MCF 10A (cell line): ENCODE measurements at regions of chr21 and their contacts with region 1.

Region 1: DNA sequence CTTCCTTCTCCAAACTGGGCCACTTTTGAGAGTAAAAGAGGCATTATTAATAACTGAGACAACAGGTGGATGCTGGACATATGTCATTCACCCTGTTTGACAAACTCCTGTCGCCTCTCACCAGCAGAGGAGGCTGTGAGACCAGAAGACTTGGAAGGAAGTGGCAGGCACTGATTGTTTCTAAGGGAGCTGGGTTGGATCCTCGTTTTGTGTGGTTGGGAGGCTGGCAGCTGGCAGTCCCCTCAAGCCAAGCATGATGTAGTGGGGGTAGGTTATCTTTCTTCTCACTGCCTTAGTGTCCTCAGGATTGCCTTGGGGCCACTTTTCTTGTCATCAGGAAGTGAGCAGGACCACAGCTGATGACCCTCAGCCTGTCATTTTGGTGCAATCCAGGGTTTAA is 86.5 kb upstream of the KCNJ15 start:
- DNase-seq: peak; percentile 68
- H3K4me3 Mint-ChIP-seq: no peak overlapping the region
- H3K27ac Mint-ChIP-seq: no peak overlapping the region
- H3K4me1 Mint-ChIP-seq: peaks cover 26% of the 10 kb centered on the region
- H3K27me3 Mint-ChIP-seq: no peaks in the 10 kb centered on the region
- CTCF ChIP-seq: peak; percentile 38

Region 2: GRCh38 chr21:37700641-37701202 is 469.6 kb before region 1 on chr21:
- CTCF ChIA-PET with region 1: no interaction called
- POLR2A ChIA-PET with region 1: no interaction called
- intact Hi-C with region 1: loop called (anchors 1 kb)
- DNase-seq: peak; percentile 88
- H3K4me3 Mint-ChIP-seq: no peak overlapping the region
- H3K27ac Mint-ChIP-seq: no peak overlapping the region
- H3K4me1 Mint-ChIP-seq: no peaks in the 10 kb centered on the region
- H3K27me3 Mint-ChIP-seq: peaks cover 24% of the 10 kb centered on the region
- CTCF ChIP-seq: peak; percentile 57

Region 3: DNA sequence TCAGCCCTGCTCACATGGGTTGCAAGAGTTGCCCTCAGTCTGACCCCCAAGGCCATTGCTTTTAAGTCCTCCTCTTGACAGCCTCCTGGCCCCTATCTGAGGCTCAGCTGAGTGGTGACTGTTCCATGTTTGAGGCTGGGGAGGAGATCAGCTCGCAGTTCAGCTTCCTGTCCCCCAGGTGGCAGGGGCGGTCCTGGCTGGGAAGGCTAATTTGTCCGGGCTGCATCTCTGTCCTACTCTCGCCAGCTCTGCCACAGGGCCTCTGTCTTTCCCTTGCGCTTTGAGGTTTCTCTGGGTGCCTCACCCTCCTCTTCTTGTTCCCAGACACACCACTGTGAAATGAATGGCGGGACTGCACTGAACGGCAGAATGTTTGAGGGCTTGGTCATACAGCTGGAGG is 411.3 kb before region 1 on chr21:
- CTCF ChIA-PET with region 1: interaction called, 3 read pairs
- POLR2A ChIA-PET with region 1: no interaction called
- intact Hi-C with region 1: loop called (anchors 1 kb)
- DNase-seq: peak; percentile 54
- H3K4me3 Mint-ChIP-seq: no peak overlapping the region
- H3K27ac Mint-ChIP-seq: no peak overlapping the region
- H3K4me1 Mint-ChIP-seq: peaks cover 8% of the 10 kb centered on the region
- H3K27me3 Mint-ChIP-seq: peaks cover 21% of the 10 kb centered on the region
- CTCF ChIP-seq: peak; percentile 73

Region 4: DNA sequence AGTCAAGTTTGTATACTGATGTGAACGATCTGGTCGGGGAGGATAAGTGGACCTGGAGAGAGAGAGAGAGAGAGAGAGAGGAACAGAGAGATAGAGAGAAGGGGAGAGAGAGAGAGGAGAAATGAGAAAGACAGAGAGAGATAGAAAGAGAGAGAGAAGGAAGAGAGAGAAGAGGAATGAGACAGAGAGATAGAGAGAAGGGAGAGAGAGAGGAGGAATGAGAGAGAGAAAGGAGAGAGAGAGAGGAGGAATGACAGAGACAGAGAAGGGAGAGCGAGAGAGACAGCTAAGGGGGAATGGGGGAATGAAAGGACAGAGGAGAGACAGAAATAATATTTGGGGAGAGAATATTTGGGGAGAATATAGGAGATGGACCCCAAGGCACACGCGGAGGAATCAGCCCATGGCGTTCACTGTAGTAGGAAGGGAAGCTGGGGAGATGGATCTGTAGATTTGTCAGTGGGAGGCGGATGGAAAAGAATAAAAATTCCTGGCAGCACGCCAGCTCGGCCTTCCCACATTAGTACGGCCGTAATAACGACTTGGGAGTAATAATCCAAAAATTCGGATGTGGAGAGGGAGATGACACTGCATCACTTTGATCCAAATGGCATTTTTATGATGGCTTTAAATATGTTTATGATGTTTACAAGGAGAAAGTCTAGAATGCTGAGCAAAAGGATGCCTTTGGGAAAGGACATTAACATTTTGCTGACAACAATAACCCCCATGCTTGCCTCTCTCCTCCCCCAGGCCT is 94.3 kb before region 1 on chr21:
- CTCF ChIA-PET with region 1: no interaction called
- POLR2A ChIA-PET with region 1: no interaction called
- intact Hi-C with region 1: no loop called
- DNase-seq: no peak
- H3K4me3 Mint-ChIP-seq: no peak overlapping the region
- H3K27ac Mint-ChIP-seq: no peak overlapping the region
- H3K4me1 Mint-ChIP-seq: no peaks in the 10 kb centered on the region
- H3K27me3 Mint-ChIP-seq: peaks cover 32% of the 10 kb centered on the region
- CTCF ChIP-seq: no peak

Region 5: GRCh38 chr21:38159355-38159754 is 10.9 kb before region 1 on chr21:
- CTCF ChIA-PET with region 1: interaction called, 11 read pairs
- POLR2A ChIA-PET with region 1: interaction called, 4 read pairs
- intact Hi-C with region 1: no loop called
- DNase-seq: peak; percentile 75
- H3K4me3 Mint-ChIP-seq: no peak overlapping the region
- H3K27ac Mint-ChIP-seq: no peak overlapping the region
- H3K4me1 Mint-ChIP-seq: peaks cover 9% of the 10 kb centered on the region
- H3K27me3 Mint-ChIP-seq: no peaks in the 10 kb centered on the region
- CTCF ChIP-seq: peak; percentile 79

Region 6: DNA sequence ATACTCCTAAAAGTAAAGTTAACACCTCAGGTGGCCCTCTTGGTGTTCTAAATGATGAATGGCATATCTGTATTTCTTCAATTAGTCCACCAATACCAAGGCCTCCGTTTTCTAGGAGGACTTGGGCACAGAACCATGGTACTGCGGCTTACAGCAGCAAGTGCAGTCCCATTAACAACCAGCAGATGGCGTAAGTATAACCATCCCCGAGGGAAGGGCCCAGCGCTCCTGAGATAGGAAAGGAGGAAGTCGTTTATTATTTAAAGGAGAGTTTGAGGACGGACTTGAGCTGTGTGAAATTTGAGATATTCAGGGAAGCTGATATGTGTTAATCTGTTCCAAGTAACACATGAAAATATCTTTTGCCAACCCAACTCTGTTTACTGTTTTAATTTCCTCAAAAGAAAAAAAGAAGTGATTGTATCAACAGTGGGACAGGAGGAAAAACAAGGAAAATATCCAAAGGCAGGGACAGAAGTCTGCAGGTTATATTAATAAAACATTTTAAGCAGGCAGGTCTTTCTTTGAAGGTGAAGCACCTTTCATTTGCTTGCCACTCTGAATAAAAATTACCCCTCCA is 48.9 kb after region 1 on chr21:
- CTCF ChIA-PET with region 1: interaction called, 28 read pairs
- POLR2A ChIA-PET with region 1: no interaction called
- intact Hi-C with region 1: loop called (anchors 1 kb)
- DNase-seq: peak; percentile 78
- H3K4me3 Mint-ChIP-seq: no peak overlapping the region
- H3K27ac Mint-ChIP-seq: no peak overlapping the region
- H3K4me1 Mint-ChIP-seq: peaks cover 7% of the 10 kb centered on the region
- H3K27me3 Mint-ChIP-seq: no peaks in the 10 kb centered on the region
- CTCF ChIP-seq: peak; percentile 94

Region 7: GRCh38 chr21:38310619-38311018 is 140.3 kb after region 1 on chr21:
- CTCF ChIA-PET with region 1: no interaction called
- POLR2A ChIA-PET with region 1: no interaction called
- intact Hi-C with region 1: no loop called
- DNase-seq: peak; percentile 93
- H3K4me3 Mint-ChIP-seq: no peak overlapping the region
- H3K27ac Mint-ChIP-seq: no peak overlapping the region
- H3K4me1 Mint-ChIP-seq: peaks cover 30% of the 10 kb centered on the region
- H3K27me3 Mint-ChIP-seq: no peaks in the 10 kb centered on the region
- CTCF ChIP-seq: no peak